Astrocyte of the cerebellum (primary cell): ENCODE measurements at regions of chr5 and their contacts with region 1.

Region 1: DNA sequence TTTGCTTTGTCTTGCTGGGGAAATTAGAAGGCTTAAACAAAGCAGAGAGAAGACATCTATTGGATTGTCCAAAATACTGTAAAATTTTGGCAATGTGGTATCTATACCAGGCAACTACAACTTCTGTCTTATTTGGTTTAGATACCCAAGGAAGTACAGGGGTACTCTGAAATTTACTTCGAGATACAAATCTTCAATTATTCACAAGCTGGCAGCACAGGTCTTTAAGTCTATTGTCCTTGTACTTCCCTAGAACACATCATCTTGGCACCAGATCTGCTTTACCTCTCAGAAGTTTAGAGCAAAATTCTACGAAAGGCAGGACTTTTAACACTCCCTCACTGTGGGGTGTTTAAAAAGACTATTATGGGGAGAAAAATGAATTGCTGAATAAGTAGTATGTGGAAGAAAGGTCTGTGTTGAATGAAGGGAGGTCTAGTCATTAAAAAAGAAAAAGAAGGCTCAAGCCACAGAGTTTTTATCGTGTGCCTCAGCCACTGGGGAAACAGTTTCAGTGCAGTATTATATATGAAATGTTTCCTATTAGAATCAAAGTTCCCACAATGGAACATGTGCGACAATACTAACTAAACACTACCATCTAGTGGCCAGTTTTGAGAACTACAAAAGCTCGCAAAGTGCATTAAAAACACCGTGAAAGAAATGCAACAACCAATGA is 93.7 kb downstream of the PDE4D start:
- DNase-seq: peak; percentile 50
- H3K4me3 ChIP-seq: no peak overlapping the region
- CTCF ChIP-seq: peak; percentile 58

Region 2: DNA sequence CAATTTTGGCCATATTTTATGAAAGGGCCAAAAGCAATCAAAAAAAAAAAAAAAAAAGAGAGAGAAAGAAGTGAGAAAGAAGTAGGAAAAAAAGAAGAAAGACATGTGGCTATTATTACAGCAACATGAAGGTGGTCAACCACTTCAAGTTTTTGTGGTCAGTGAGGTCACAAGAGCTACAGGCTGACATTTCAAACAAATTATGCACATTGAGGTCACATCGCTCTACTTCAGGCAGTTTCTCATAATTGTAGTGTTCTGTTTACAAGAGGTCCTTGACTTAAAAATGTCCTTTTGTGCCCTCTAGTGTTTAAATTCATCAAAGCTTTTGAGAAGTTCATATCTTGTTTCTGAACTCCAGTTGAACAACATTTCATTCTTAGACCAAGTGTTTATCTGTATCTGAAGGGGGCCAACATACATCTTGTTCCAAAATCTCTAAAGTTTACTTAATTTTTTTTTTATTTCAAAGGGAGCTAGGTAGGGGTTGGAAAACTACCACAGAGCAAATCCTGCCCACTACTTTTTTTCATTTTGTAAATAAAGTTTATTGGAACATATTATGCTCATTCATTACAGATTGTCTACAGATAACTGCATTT is 419.4 kb before region 1 on chr5:
- in situ Hi-C with region 1: loop called (anchors 10 kb)
- DNase-seq: peak; percentile 92
- H3K4me3 ChIP-seq: no peak overlapping the region
- CTCF ChIP-seq: peak; percentile 28

Region 3: DNA sequence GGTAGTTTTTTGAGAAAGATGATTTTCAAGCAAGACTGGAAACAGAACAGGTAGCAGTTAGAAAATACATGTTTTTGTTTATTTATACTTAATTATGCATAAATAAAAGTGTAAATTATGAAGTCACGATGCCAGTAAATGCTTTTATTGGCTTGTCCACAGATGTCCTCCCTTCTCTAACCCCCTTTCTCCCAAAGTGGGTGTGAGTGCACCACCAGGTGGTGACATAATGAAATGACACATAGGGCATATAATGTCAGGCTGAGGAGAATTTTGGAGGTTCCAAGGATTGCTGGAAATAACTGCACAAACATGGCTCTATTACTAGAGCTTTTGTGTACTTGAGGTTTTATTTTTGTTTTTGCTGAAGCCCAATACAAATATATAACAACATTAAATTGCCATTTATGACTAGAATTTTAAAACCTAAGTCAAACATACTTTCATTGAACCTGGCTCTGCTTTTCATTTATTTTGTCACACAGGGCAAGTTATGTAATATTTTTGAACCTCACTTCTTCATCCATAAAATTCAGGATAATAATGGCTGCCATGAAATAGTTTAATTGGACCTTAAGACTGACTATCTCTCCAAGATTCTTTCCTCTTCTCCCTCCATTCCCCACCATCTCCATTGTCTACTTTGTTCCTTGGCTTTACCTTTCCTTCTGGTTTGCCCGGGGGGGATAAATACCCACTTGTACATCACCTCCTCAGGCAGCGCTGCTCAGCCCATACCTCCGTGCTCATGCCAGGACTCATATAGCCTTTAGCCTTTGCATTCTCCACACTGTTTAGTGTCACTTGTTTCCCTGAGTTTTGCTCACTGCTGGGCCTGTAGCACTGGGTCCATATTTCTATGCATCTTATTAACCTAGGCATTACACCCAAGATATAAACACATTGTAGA is 75.1 kb before region 1 on chr5:
- in situ Hi-C with region 1: no loop called
- DNase-seq: no peak
- H3K4me3 ChIP-seq: no peak overlapping the region
- CTCF ChIP-seq: peak; percentile 79

Region 4: DNA sequence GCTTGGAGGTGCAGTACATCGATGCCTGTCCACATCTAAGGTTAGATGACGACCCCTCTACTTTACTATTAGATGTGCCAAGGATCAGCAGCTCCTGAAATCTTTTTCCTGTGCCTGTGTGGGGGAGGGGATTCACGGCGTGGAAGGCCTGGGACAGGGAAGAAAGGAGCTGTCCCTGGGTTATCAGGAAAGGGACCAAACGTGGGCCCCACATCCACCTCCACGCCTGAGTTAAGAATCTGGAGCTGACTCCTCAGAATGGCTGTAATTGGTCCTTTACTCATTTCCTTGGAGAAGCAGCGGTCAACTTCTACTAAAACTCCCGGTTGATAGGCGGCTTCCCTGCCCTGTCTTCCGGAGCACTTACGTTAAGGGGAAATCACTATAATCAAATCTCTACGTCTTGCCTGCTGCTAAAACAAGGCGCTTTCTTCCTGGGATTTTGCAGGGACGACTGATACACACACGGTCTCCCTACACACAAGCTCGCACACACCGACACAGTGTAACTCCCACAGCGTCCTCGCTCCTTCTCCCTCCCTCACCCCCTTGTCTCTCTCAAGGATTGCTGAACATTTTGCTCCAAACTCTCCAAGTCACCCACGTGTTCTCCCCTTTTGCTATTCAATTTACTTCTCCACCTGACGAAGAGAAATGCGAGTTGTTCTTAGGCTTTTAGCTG is 92.3 kb after region 1 on chr5:
- in situ Hi-C with region 1: no loop called
- DNase-seq: no peak
- H3K4me3 ChIP-seq: no peak overlapping the region
- CTCF ChIP-seq: no peak

Region 5: GRCh38 chr5:60297658-60298057 is 497.9 kb after region 1 on chr5:
- in situ Hi-C with region 1: no loop called
- DNase-seq: peak; percentile 20
- H3K4me3 ChIP-seq: no peak overlapping the region
- CTCF ChIP-seq: no peak